ENCODE measurements at regions of chr14 and their contacts with region 1.

Region 1: GRCh38 chr14:90642244-90642717 is 173.9 kb downstream of the TTC7B start:
- DNase-seq: peak; percentile 46 to 71
- H3K4me3 ChIP-seq: no peak overlapping the region
- H3K4me3 Mint-ChIP-seq: no peak overlapping the region
- H3K27ac Mint-ChIP-seq: peak overlapping the region; percentile 45
- H3K4me1 ChIP-seq: peaks cover 50% of the 10 kb centered on the region
- H3K4me1 Mint-ChIP-seq: peaks cover 22% of the 10 kb centered on the region
- H3K27me3 ChIP-seq: no peaks in the 10 kb centered on the region
- H3K27me3 Mint-ChIP-seq: no peaks in the 10 kb centered on the region
- CTCF ChIP-seq: no peak

Region 2: GRCh38 chr14:90661866-90662265 is 19.6 kb after region 1 on chr14:
- CTCF ChIA-PET with region 1: interaction called, 3 read pairs
- POLR2A ChIA-PET with region 1: no interaction called
- intact Hi-C with region 1: loop called (anchors 1 kb)
- DNase-seq: no peak
- H3K4me3 ChIP-seq: no peak overlapping the region
- H3K4me3 Mint-ChIP-seq: no peak overlapping the region
- H3K27ac Mint-ChIP-seq: no peak overlapping the region
- H3K4me1 ChIP-seq: no peaks in the 10 kb centered on the region
- H3K4me1 Mint-ChIP-seq: no peaks in the 10 kb centered on the region
- H3K27me3 ChIP-seq: no peaks in the 10 kb centered on the region
- H3K27me3 Mint-ChIP-seq: no peaks in the 10 kb centered on the region
- CTCF ChIP-seq: no peak

Region 3: GRCh38 chr14:90687680-90688079 is 45.4 kb after region 1 on chr14:
- CTCF ChIA-PET with region 1: no interaction called
- POLR2A ChIA-PET with region 1: no interaction called
- intact Hi-C with region 1: loop called (anchors 5 kb)
- DNase-seq: no peak
- H3K4me3 ChIP-seq: no peak overlapping the region
- H3K4me3 Mint-ChIP-seq: no peak overlapping the region
- H3K27ac Mint-ChIP-seq: no peak overlapping the region
- H3K4me1 ChIP-seq: no peaks in the 10 kb centered on the region
- H3K4me1 Mint-ChIP-seq: no peaks in the 10 kb centered on the region
- H3K27me3 ChIP-seq: no peaks in the 10 kb centered on the region
- H3K27me3 Mint-ChIP-seq: no peaks in the 10 kb centered on the region
- CTCF ChIP-seq: no peak

Region 4: GRCh38 chr14:90940318-90940962 is 298.2 kb after region 1 on chr14:
- CTCF ChIA-PET with region 1: no interaction called
- POLR2A ChIA-PET with region 1: no interaction called
- intact Hi-C with region 1: no loop called
- DNase-seq: no peak
- H3K4me3 ChIP-seq: no peak overlapping the region
- H3K4me3 Mint-ChIP-seq: no peak overlapping the region
- H3K27ac Mint-ChIP-seq: no peak overlapping the region
- H3K4me1 ChIP-seq: no peaks in the 10 kb centered on the region
- H3K4me1 Mint-ChIP-seq: no peaks in the 10 kb centered on the region
- H3K27me3 ChIP-seq: no peaks in the 10 kb centered on the region
- H3K27me3 Mint-ChIP-seq: no peaks in the 10 kb centered on the region
- CTCF ChIP-seq: no peak